ENCODE measurements at regions of chr12 and their contacts with region 1.

Region 1: DNA sequence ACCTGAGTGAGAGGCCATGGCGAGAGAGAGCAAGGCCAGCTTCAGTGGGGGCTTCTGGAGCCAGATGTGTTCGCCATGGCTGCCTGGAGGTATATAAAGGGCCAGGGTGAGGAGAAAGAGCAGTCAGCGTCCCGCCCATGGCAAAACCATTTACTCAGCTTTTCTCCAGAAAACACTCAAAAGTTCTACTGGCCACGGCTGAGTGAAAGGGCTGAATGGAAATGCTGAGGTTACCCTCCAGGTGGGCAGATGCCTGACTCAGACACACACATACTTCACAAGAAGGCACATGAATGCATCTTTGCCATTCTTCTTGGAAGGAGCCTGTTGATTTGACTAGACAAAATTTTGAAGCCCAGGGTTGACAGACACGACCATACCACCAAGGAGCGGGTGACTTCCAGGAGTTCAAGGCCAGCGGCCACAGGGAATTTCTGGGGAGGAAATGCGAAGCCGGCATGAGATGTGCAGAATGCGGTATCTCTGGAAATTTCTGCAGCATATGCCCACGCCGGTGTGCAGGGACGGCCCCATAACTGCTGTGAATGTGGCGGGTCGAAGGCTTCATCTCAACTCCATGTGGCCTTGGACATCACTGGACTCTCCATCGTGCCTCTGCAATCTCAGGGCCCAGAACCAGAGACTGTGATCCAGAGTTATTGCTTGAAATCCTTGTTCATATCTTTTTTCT is at the start of gene IL31:
- DNase-seq: no peak
- H3K4me3 Mint-ChIP-seq: no peak within 1 kb of the TSS
- H3K27ac Mint-ChIP-seq: no peak within 1 kb of the TSS
- H3K4me1 Mint-ChIP-seq: no peaks in the 10 kb centered on the region
- H3K27me3 Mint-ChIP-seq: peaks cover 8% of the 10 kb centered on the region
- total RNA-seq, gene IL31: 5.5 and 6.6 TPM in 2 replicates

Region 2: DNA sequence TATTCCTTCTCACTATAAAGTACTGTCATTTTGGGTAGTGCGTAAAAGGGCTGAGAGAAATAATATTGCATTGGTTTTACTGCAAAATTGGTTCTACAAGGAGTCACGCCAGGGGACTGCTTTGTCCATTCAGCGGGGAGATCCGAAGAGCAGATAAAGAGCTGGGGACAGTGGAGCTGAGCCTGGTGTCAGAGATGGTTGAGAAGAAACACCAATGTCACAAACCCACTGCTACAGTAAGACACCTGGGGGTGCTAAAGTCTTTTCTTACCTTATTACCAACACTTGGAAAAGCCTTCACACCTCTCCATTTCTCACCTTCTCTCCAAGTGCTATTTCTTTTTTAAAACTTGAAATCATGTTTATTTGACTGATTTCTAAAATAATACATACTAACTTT is 14.4 kb before region 1 on chr12:
- intact Hi-C with region 1: loop called (anchors 2 kb)
- DNase-seq: no peak
- H3K4me3 Mint-ChIP-seq: no peak overlapping the region
- H3K27ac Mint-ChIP-seq: no peak overlapping the region
- H3K4me1 Mint-ChIP-seq: peaks cover 21% of the 10 kb centered on the region
- H3K27me3 Mint-ChIP-seq: peaks cover 3% of the 10 kb centered on the region

Region 3: DNA sequence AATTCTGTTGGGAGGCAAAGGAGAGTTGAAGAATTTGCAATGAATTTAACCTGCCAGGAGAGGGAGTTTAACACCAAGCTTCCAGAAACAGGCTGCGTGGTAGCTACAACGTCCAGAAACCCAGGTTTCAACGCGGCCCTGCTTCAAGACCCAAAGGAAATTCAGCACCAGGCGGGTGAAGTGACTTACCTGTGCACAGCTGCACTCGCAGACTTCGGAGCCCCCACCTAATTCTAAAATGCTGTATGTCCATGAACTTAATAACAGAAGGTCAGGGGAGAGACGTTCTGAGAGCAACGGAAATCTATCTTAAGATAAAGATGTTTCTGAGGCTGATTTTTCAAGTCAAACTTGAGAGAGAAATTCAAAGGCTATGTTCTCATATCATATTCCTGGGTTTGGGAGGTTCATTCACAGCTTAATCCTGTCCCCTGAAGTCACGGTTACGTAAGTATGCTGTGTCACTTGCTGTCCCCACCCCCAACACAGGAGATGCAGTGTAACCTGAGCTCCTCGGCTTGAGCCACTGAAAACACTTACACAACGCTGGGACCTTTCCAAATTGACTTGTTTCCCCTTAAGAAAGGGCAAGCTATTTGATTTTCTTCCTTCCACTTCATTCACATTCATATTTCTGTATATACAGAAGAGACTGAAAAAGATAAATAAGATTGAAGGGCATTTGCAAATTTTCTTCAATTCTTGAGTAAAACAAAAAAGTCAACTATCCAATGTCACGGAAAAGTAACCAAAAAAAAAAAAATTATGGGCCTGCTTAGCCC is 225.5 kb after region 1 on chr12:
- intact Hi-C with region 1: no loop called
- DNase-seq: peak; percentile 38
- H3K4me3 Mint-ChIP-seq: peak overlapping the region; percentile 65
- H3K27ac Mint-ChIP-seq: peak overlapping the region; percentile 66
- H3K4me1 Mint-ChIP-seq: peaks cover 30% of the 10 kb centered on the region
- H3K27me3 Mint-ChIP-seq: no peaks in the 10 kb centered on the region

Measured in activated T-helper 1 cell treated with anti-CD3 and anti-CD28 coated beads, Interleukin-12 subunit alpha, Interleukin-12 subunit beta, Interleukin-2, Interleukin-4 antibody, amounts not matched to agents 30 ng/mL and 10 ng/mL and 1 ng/mL, durations not matched to agents 14 hours and 24 hours and 36 hours (primary cell).